HepG2 (cell line): ENCODE measurements at regions of chrX and their contacts with region 1.

Region 1: DNA sequence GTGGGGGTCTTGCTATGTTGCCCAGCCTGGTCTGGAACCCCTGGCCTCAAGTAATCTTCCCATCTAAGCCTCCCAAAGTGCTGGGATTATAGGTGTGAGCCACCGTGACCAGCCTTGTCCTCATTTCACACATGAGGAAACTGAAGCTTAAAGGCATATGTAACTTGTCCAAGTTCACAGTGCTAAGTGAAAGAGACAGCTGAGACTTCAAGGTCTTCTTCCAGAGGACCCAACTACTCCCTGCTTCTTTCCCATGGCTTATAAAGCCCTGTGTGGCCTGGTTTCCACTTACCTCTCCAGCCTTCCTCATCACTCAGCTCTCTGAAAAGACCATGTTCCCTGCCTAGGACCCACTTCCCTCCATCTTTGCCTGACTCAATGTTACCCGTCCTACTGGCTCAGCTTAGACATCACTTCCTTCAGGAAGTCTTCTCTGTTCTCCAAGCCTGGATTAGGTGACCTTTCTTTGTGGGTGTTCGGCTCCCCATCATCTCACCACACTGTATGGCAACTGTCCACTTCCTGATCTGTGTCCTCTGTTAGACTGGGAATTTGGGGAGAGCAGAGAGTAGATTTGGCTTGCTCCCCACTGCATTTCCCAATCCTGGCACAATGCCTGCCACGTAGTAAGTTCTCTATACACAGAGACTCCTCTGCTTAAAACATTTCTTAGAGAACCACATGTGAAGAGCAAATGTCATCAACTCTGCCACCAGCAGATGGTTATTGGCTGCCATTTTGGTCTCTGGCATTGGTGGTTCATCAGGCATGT is 30.4 kb upstream of the LAMP2 start:
- DNase-seq: no peak
- ATAC-seq: no peak
- H3K4me3 ChIP-seq: no peak overlapping the region
- H3K27ac ChIP-seq: no peak overlapping the region
- H3K4me1 ChIP-seq: no peaks in the 10 kb centered on the region
- H3K27me3 ChIP-seq: no peaks in the 10 kb centered on the region
- CTCF ChIP-seq: no peak
- EP300 ChIP-seq: no peak
- POLR2A ChIP-seq: no peak
- RAD21 ChIP-seq: no peak

Region 2: GRCh38 chrX:120534413-120535205 is 35.1 kb after region 1 on chrX:
- CTCF ChIA-PET with region 1: no interaction called
- POLR2A ChIA-PET with region 1: no interaction called
- in situ Hi-C with region 1: no loop called
- intact Hi-C with region 1: no loop called
- DNase-seq: no peak
- ATAC-seq: no peak
- H3K4me3 ChIP-seq: no peak overlapping the region
- H3K27ac ChIP-seq: no peak overlapping the region
- H3K4me1 ChIP-seq: no peaks in the 10 kb centered on the region
- H3K27me3 ChIP-seq: no peaks in the 10 kb centered on the region
- CTCF ChIP-seq: no peak
- EP300 ChIP-seq: no peak
- POLR2A ChIP-seq: no peak
- RAD21 ChIP-seq: no peak

Region 3: GRCh38 chrX:120664081-120664480 is 164.6 kb after region 1 on chrX:
- CTCF ChIA-PET with region 1: interaction called, 7 read pairs
- POLR2A ChIA-PET with region 1: no interaction called
- in situ Hi-C with region 1: no loop called
- intact Hi-C with region 1: loop called (anchors 1 kb)
- DNase-seq: peak; percentile 7
- ATAC-seq: no peak
- H3K4me3 ChIP-seq: no peak overlapping the region
- H3K27ac ChIP-seq: no peak overlapping the region
- H3K4me1 ChIP-seq: no peaks in the 10 kb centered on the region
- H3K27me3 ChIP-seq: no peaks in the 10 kb centered on the region
- CTCF ChIP-seq: peak; percentile 27; the same call in 1 of the 2 replicates
- EP300 ChIP-seq: no peak
- POLR2A ChIP-seq: no peak
- RAD21 ChIP-seq: no peak

Region 4: DNA sequence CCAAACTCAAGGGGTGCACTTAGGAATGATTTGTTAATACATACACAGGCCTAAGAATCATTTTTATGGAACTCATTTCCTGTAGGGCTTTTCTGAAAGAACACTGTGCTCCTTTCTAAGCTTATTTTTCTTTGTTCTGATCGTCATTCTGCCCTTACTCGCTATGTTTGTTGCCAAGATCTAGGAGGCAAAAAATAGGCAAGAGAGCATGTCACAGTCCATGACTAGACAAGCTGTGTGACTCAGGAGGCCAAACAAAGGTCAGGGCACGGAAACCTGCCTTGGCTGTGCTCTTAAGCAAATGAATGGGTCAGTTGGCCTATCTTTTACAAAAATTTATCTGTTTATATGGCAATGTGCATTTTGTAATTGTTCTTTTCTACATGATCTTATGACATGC is 172.9 kb after region 1 on chrX:
- CTCF ChIA-PET with region 1: interaction called, 3 read pairs
- POLR2A ChIA-PET with region 1: no interaction called
- in situ Hi-C with region 1: no loop called
- intact Hi-C with region 1: loop called (anchors 5 kb)
- DNase-seq: peak; percentile 18
- ATAC-seq: peak; percentile 60; the same call in 2 of the 3 replicates
- H3K4me3 ChIP-seq: no peak overlapping the region
- H3K27ac ChIP-seq: no peak overlapping the region
- H3K4me1 ChIP-seq: peaks cover 10% of the 10 kb centered on the region; the same call in 1 of the 2 replicates
- H3K27me3 ChIP-seq: no peaks in the 10 kb centered on the region
- CTCF ChIP-seq: no peak
- EP300 ChIP-seq: no peak
- POLR2A ChIP-seq: no peak
- RAD21 ChIP-seq: no peak

Region 5: GRCh38 chrX:120755066-120755846 is 255.8 kb after region 1 on chrX:
- CTCF ChIA-PET with region 1: no interaction called
- POLR2A ChIA-PET with region 1: no interaction called
- in situ Hi-C with region 1: loop called (anchors 10 kb)
- intact Hi-C with region 1: no loop called
- DNase-seq: peak; percentile 82
- ATAC-seq: peak; percentile 78
- H3K4me3 ChIP-seq: no peak overlapping the region
- H3K27ac ChIP-seq: peak overlapping the region; percentile 84
- H3K4me1 ChIP-seq: peaks cover 59% of the 10 kb centered on the region
- H3K27me3 ChIP-seq: no peaks in the 10 kb centered on the region
- CTCF ChIP-seq: no peak
- EP300 ChIP-seq: peak in 1 of 2 experiments; percentile 82; a peak in 2 of 4 replicates
- POLR2A ChIP-seq: no peak
- RAD21 ChIP-seq: no peak

Region 6: DNA sequence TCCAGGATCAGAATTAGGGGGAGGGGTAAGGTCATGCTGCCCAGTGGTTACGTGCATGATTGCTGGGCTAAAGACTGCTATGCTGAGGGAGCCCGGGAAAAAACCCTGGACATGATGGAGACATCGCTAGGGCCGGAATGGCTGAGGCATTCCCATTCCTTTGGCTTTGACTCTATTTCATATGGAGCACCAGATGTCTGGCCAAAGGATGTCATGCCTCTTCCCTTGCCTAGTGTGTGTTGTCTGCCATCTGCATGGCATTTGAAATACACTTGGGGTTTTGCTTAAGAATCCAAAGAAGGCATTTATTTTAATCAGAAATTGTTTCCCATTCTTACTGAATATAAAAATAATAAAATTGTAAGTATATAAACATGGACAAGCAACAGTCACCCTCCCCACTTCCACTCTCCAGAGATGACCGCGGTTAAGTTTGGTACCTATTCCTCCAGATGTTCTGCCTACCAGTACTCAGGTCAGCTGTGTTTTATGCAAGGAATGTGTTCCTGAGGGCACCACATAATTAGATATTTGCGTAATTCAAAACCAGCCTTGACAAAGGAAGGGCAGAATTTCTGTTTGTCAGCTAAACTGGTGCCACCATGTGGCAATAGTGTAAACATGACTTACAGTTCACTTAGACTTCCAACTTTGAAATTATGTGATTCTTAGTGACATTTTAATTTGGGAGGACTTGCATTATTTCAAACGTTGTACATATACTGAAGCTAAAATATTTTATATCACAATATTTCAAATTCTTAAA is 270.3 kb after region 1 on chrX:
- CTCF ChIA-PET with region 1: no interaction called
- POLR2A ChIA-PET with region 1: no interaction called
- in situ Hi-C with region 1: no loop called
- intact Hi-C with region 1: loop called (anchors 1 kb)
- DNase-seq: peak; percentile 59
- ATAC-seq: no peak
- H3K4me3 ChIP-seq: no peak overlapping the region
- H3K27ac ChIP-seq: no peak overlapping the region
- H3K4me1 ChIP-seq: peaks cover 7% of the 10 kb centered on the region
- H3K27me3 ChIP-seq: no peaks in the 10 kb centered on the region
- CTCF ChIP-seq: peak; percentile 58
- EP300 ChIP-seq: no peak
- POLR2A ChIP-seq: no peak
- RAD21 ChIP-seq: peak; percentile 41; the same call in 1 of the 2 replicates